Right ventricle myocardium superior (tissue), 1 donor: ENCODE measurements at regions of chr1 and their contacts with region 1.

Region 1: DNA sequence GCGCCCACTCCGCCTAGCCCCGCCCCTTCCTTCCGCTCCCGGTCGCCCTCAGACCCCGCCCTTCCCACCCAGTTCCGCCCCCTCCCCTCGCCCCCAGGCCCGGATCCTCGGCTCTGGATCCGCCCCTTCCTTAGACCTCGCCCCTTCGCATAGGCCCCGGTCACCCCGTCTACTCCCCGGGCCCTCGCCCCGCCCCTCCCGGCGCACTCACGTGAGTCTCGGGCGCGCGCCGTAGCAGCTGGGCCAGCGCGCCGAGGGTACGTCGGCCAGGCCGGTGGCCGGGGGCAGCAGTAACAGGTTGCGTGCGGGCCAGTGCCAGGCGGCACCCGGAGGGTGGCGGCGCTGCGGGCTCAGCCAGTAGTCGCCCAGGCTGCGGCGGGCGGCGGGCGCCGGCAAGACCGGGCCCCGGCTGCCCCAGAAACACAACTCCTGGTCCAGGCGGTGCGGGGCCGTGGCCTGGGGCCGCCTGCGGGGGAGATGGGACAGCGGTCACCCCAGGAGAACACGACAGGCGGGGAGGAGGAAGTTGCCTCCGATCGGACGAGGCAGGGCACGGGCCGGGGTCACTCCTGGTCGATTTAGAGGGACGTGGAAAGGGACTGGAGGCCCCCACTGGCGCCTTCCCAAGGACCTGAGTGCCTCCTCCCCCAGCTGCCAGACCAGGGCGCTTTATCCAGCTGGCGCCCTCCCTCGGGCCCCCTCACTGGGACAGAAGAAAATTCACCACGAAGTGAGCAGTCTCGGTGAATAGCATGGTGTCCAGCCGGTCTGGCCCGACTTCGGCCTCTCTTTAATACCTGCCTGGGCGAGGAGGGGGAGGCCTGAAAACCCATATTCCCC is 10.7 kb downstream of the FAM229A start:
- DNase-seq: peak; percentile 96
- ATAC-seq: peak; percentile 90

Region 2: GRCh38 chr1:32380057-32380456 is 28.4 kb after region 1 on chr1:
- intact Hi-C with region 1: no loop called
- DNase-seq: no peak
- ATAC-seq: no peak

Region 3: GRCh38 chr1:32394141-32394889 is 42.7 kb after region 1 on chr1 and contains the start of gene BSDC1:
- intact Hi-C with region 1: loop called (anchors 5 kb)
- DNase-seq: peak; percentile 98
- ATAC-seq: peak; percentile 98
- total RNA-seq, gene BSDC1: 43.7 TPM